Right ventricle myocardium inferior (tissue), 1 donor: ENCODE measurements at regions of chr1 and their contacts with region 1.

Region 1: GRCh38 chr1:225881969-225882693 is at the start of gene TMEM63A:
- DNase-seq: peak; percentile 96
- ATAC-seq: peak; percentile 94
- total RNA-seq, gene TMEM63A: 30.6 TPM

Region 2: DNA sequence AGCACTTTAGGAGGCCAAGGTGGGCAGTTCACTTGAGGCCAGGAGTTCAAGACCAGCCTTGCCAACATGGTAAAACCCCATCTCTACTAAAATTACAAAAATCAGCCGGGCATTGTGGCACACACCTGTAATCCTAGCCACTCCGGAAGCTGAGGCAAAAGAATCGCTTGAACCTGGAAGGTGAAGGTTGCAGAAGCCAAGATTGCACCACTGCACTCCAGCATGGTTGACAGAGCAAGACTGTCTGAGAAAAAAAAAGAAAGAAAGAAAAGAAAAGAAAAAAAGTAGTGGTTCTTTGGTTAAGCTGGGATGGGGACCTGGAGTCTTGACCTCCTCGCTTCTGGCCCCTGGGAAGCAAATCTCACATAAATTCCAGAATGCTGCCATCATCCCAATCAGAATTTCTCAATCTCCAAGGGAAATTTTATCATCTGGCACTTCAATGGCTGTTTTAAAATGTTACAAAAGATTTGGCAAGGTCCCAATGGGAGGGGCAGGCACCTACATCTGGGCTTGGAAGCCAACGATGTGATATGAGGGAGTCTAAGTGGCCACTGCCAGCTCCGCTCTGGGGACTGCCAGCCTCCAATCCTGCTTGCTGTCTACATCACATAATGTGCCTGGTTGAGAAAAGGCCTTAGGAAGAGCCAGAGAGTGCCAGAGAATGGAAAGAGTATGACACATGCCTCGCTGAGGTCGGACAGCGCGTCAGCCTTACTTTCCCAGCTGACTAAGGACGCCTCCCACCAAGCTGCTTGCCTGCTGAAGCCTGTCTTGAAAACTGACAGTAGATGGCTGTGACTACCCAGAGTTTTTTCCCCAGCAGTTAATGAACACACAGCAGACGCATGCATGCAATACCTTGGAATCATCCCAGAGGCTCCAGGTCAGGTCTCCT is 146.6 kb before region 1 on chr1:
- intact Hi-C with region 1: no loop called
- DNase-seq: peak; percentile 83
- ATAC-seq: peak; percentile 94

Region 3: GRCh38 chr1:225794954-225795353 is 87.2 kb before region 1 on chr1:
- intact Hi-C with region 1: no loop called
- DNase-seq: no peak
- ATAC-seq: no peak

Region 4: GRCh38 chr1:225809842-225810578 is 72.1 kb before region 1 on chr1 and contains the start of gene EPHX1:
- intact Hi-C with region 1: loop called (anchors 5 kb)
- DNase-seq: peak; percentile 94
- ATAC-seq: peak; percentile 91
- total RNA-seq, gene EPHX1: 76.0 TPM

Region 5: DNA sequence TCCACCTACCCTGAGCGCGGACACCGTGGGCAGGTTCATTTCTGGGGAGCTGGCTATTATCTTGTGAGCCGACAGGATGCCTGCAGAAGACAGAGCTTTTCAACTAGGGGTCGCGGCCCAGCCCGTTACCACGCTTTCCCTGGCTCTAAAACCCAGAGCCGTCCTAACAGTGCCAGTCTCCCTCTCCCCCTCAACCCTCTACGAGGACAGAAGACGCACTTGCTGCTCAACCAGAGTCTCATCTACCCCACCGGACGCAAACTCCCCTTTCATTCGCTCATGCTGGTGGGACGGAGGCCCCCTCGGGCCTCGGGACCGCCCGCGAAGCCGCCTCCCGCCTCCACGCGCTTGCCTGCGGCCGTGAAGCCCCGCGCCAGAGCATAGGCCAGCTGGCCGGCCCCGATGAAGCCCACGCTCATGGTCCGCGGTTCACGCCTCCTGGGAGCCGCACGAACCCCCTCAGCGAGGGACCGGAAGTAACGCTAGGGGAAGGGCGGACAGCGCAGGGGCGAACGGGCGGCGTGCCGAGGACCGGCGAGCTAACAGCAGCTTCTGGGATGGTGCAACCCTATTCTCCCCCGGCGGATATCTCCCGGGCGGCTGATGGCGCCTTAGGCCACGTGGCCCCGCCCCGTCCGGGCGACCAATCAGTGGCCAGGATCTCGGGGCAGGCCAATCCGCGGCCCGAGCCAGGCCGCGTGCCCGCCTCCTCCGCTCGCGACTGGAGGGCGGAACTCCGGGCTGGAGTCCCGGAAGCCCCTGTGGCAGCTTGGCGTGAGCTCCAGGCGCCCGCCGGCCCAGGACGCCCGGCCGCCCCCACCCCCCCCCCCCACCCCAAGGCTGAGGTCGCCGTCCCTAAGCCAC is 41.8 kb after region 1 on chr1 and contains the start of gene PYCR2:
- intact Hi-C with region 1: loop called (anchors 1 kb)
- DNase-seq: peak; percentile 98
- ATAC-seq: peak; percentile 99
- total RNA-seq, gene PYCR2: 58.6 TPM

Region 6: GRCh38 chr1:226064816-226065248 is 182.7 kb after region 1 on chr1:
- intact Hi-C with region 1: no loop called
- DNase-seq: no peak
- ATAC-seq: no peak